WTC11 (cell line): ENCODE measurements at regions of chr20 and their contacts with region 1.

Region 1: DNA sequence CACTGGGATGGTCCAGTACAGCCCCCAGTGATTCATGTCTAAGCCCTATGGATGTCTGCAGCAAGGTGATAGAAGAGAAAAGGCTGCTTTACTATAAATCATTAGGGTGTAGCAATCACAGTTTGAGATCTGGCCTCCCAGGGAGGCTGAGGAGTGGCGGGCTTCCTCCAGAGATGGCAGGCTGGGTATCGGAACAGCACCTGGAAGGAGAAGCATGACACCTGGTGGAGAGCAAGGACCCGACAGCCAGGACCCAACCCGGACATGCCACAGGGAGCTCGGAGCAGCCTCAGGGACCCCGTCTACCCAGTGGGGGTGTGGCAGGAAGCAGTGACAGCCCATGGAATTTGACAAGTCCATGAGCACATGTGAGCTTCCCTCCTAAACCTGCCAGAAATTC is 114.8 kb upstream of the CD93 start:
- DNase-seq: peak; percentile 77
- ATAC-seq: peak; percentile 92
- H3K4me3 Mint-ChIP-seq: no peak overlapping the region
- H3K27ac Mint-ChIP-seq: no peak overlapping the region
- H3K4me1 Mint-ChIP-seq: peaks cover 20% of the 10 kb centered on the region
- H3K27me3 Mint-ChIP-seq: peaks cover 13% of the 10 kb centered on the region
- CTCF ChIP-seq: peak; percentile 35; the same call in 1 of the 2 replicates

Region 2: GRCh38 chr20:22846863-22847262 is 354.1 kb before region 1 on chr20:
- CTCF ChIA-PET with region 1: interaction called, 12 read pairs
- POLR2A ChIA-PET with region 1: no interaction called
- DNase-seq: no peak
- ATAC-seq: no peak
- H3K4me3 Mint-ChIP-seq: no peak overlapping the region
- H3K27ac Mint-ChIP-seq: no peak overlapping the region
- H3K4me1 Mint-ChIP-seq: 0 out of 2 replicates have a peak, but pooled peaks cover 3% of the 10 kb centered on the region
- H3K27me3 Mint-ChIP-seq: no peaks in the 10 kb centered on the region
- CTCF ChIP-seq: no peak

Region 3: DNA sequence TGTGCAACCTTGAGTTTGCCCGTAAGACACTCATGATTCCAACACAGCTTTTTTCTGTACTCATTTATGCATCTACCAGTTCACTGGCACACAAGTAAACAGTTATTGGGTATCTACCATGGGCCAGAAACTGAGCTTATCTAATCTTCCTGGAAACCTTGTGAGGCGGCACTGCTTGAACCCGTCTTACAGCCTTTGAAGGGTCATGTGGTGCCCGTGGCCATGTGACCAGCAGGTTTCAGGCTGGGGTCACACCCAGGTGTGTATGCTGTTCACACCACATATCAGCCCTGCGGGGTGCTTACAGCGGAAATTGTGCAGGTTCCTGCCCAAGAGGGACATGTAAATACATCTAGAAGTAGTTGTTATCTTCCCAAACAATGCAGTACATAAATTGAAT is 157.5 kb before region 1 on chr20:
- CTCF ChIA-PET with region 1: interaction called, 126 read pairs
- POLR2A ChIA-PET with region 1: no interaction called
- DNase-seq: no peak
- ATAC-seq: no peak
- H3K4me3 Mint-ChIP-seq: no peak overlapping the region
- H3K27ac Mint-ChIP-seq: no peak overlapping the region
- H3K4me1 Mint-ChIP-seq: peaks cover 56% of the 10 kb centered on the region
- H3K27me3 Mint-ChIP-seq: peaks cover 82% of the 10 kb centered on the region
- CTCF ChIP-seq: no peak

Region 4: GRCh38 chr20:23090141-23090540 is 110.8 kb before region 1 on chr20:
- CTCF ChIA-PET with region 1: interaction called, 15 read pairs
- POLR2A ChIA-PET with region 1: no interaction called
- DNase-seq: peak; percentile 48
- ATAC-seq: peak; percentile 76
- H3K4me3 Mint-ChIP-seq: no peak overlapping the region
- H3K27ac Mint-ChIP-seq: no peak overlapping the region
- H3K4me1 Mint-ChIP-seq: peaks cover 23% of the 10 kb centered on the region
- H3K27me3 Mint-ChIP-seq: no peaks in the 10 kb centered on the region; the same call in 1 of the 2 replicates
- CTCF ChIP-seq: no peak

Region 5: GRCh38 chr20:23212064-23212463 is 11.1 kb after region 1 on chr20:
- CTCF ChIA-PET with region 1: interaction called, 15 read pairs
- POLR2A ChIA-PET with region 1: no interaction called
- DNase-seq: no peak
- ATAC-seq: no peak
- H3K4me3 Mint-ChIP-seq: no peak overlapping the region
- H3K27ac Mint-ChIP-seq: no peak overlapping the region
- H3K4me1 Mint-ChIP-seq: no peaks in the 10 kb centered on the region
- H3K27me3 Mint-ChIP-seq: peaks cover 22% of the 10 kb centered on the region
- CTCF ChIP-seq: no peak

Region 6: GRCh38 chr20:23245553-23246181 is 44.7 kb after region 1 on chr20:
- CTCF ChIA-PET with region 1: interaction called, 12 read pairs
- POLR2A ChIA-PET with region 1: no interaction called
- DNase-seq: peak; percentile 68
- ATAC-seq: peak; percentile 95
- H3K4me3 Mint-ChIP-seq: no peak overlapping the region
- H3K27ac Mint-ChIP-seq: no peak overlapping the region
- H3K4me1 Mint-ChIP-seq: no peaks in the 10 kb centered on the region
- H3K27me3 Mint-ChIP-seq: no peaks in the 10 kb centered on the region; the same call in 1 of the 2 replicates
- CTCF ChIP-seq: 0 out of 2 replicates have a peak, but pooled peaks have one; percentile 14

Region 7: GRCh38 chr20:23407781-23408464 is 207.0 kb after region 1 on chr20:
- CTCF ChIA-PET with region 1: no interaction called
- POLR2A ChIA-PET with region 1: no interaction called
- DNase-seq: no peak
- ATAC-seq: no peak
- H3K4me3 Mint-ChIP-seq: no peak overlapping the region
- H3K27ac Mint-ChIP-seq: no peak overlapping the region
- H3K4me1 Mint-ChIP-seq: peaks cover 13% of the 10 kb centered on the region
- H3K27me3 Mint-ChIP-seq: no peaks in the 10 kb centered on the region
- CTCF ChIP-seq: no peak